ENCODE measurements at regions of chr13 and their contacts with region 1.

Region 1: GRCh38 chr13:52652196-52652979 is at the start of gene SUGT1:
- DNase-seq: peak; percentile 96
- H3K4me3 Mint-ChIP-seq: no peak within 1 kb of the TSS
- H3K27ac Mint-ChIP-seq: no peak within 1 kb of the TSS
- H3K4me1 Mint-ChIP-seq: peaks cover 16% of the 10 kb centered on the region
- H3K27me3 Mint-ChIP-seq: no peaks in the 10 kb centered on the region
- total RNA-seq, gene SUGT1: 63.1 to 64.0 TPM

Region 2: DNA sequence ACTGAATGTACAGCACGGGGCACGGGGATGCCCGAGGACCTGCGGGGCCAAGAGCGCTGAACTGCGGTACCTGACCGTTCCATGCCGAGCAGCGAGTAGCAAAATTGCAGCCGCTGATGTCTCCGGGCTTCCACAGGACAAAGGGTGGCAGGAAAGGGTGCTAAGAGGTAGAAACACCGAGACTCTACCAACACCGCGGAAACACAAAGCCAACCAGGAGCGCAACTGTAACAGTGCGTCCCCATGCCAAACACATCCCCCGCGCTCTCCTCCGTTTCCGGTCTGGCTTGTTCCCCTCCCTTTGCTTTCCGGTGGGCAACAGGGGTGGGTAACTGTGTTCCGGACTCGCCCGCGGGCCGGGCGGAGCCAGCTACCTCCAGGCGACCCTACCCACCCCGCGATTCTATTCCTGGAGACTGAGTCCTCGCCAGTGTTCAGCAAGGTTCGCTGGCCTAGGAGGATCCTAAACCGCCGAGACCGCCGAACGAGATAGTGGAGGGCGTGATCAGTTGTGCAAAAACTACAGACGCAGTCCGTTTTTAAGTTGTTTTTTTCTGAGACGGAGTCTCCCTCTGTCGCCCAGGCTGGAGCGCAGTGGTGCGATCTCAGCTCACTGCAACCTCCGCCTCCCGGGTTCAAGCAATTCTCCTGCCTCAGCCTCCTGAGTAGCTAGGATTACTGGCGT is 458.1 kb before region 1 on chr13:
- CTCF ChIA-PET with region 1: no interaction called
- POLR2A ChIA-PET with region 1: no interaction called
- intact Hi-C with region 1: loop called (anchors 1 kb)
- DNase-seq: peak; percentile 93
- H3K4me3 Mint-ChIP-seq: peak overlapping the region; percentile 97
- H3K27ac Mint-ChIP-seq: peak overlapping the region; percentile 91
- H3K4me1 Mint-ChIP-seq: peaks cover 22% of the 10 kb centered on the region
- H3K27me3 Mint-ChIP-seq: no peaks in the 10 kb centered on the region

Region 3: GRCh38 chr13:52617070-52618060 is 35.0 kb before region 1 on chr13:
- CTCF ChIA-PET with region 1: interaction called, 31 read pairs
- POLR2A ChIA-PET with region 1: interaction called, 25 read pairs
- intact Hi-C with region 1: loop called (anchors 1 kb)
- DNase-seq: peak; percentile 92
- H3K4me3 Mint-ChIP-seq: peak overlapping the region; percentile 99
- H3K27ac Mint-ChIP-seq: peak overlapping the region; percentile 87
- H3K4me1 Mint-ChIP-seq: peaks cover 38% of the 10 kb centered on the region
- H3K27me3 Mint-ChIP-seq: no peaks in the 10 kb centered on the region

Region 4: DNA sequence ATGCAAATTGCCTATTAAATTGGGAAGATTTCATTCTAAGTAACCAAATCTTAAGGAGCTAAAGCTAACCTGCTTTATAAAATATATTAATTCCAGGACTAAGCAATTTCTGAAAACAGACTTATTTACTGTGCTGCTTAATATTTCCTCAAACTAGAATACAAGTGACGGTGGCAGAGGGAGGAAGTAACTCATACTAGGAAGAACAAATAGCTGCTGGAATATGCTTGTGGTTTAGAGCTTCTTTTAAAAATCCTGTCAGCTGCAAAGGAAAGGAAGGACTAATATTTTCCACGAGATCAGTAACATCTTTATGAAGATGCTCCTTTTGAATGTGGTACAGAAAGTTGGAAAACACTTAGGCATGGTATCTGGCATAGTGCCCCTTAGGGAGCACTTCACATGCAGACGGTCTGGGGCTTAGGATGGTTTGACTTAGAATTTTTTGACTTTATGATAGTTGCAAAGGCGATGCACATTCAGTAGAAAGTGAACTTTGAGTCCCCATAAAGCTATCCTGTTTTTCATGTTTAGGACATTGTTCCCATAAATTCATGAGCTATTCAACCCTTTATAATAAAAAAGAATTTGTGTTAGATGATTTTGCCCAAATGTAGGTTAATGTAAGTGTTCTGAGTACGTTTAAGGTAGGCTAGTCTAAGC is 13.6 kb before region 1 on chr13:
- CTCF ChIA-PET with region 1: interaction called, 10 read pairs
- POLR2A ChIA-PET with region 1: interaction called, 3 read pairs
- intact Hi-C with region 1: no loop called
- DNase-seq: no peak
- H3K4me3 Mint-ChIP-seq: no peak overlapping the region
- H3K27ac Mint-ChIP-seq: no peak overlapping the region
- H3K4me1 Mint-ChIP-seq: no peaks in the 10 kb centered on the region
- H3K27me3 Mint-ChIP-seq: no peaks in the 10 kb centered on the region

Region 5: DNA sequence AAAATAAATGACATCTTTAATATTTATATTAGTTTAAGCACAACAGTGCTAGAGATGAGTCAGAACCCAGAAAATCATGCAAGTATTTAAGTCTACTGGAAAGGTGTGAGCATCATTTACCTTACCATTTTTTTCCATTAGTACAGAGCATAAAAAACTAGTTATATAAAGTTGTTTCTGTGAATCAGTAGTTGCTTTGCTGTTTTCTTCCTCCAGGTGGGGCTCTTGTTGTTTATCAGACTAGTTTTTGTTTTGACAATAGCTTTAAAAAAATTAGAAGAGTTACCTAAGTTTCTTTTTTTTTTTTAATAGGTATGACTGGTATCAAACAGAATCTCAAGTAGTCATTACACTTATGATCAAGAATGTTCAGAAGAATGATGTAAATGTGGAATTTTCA is 12.9 kb after region 1 on chr13:
- CTCF ChIA-PET with region 1: interaction called, 23 read pairs
- POLR2A ChIA-PET with region 1: interaction called, 5 read pairs
- intact Hi-C with region 1: no loop called
- DNase-seq: no peak
- H3K4me3 Mint-ChIP-seq: no peak overlapping the region
- H3K27ac Mint-ChIP-seq: no peak overlapping the region
- H3K4me1 Mint-ChIP-seq: peaks cover 2% of the 10 kb centered on the region
- H3K27me3 Mint-ChIP-seq: no peaks in the 10 kb centered on the region

Region 6: GRCh38 chr13:52695856-52696255 is 43.5 kb after region 1 on chr13:
- CTCF ChIA-PET with region 1: no interaction called
- POLR2A ChIA-PET with region 1: no interaction called
- intact Hi-C with region 1: loop called (anchors 2 kb)
- DNase-seq: peak; percentile 71
- H3K4me3 Mint-ChIP-seq: no peak overlapping the region
- H3K27ac Mint-ChIP-seq: peak overlapping the region; percentile 31
- H3K4me1 Mint-ChIP-seq: peaks cover 15% of the 10 kb centered on the region
- H3K27me3 Mint-ChIP-seq: no peaks in the 10 kb centered on the region

Region 7: DNA sequence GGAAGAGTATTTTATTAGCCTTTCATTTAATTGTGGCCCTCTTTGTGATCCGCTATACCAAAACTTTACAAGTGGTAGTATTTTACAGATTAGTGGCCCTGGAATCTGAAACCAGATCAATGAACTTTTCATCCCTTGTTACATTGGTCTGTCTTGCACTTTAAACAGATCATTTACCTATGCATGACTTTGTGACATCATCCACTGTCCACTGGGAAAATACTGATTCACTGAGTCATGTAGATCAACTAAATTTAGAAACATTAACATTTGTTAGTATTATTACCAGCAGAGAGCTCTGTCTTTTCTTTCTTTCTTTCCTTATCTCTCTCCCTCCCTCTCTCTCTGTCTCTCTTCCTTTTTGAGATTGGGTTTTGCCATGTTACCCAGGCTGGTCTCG is 178.6 kb after region 1 on chr13:
- CTCF ChIA-PET with region 1: no interaction called
- POLR2A ChIA-PET with region 1: no interaction called
- intact Hi-C with region 1: no loop called
- DNase-seq: no peak
- H3K4me3 Mint-ChIP-seq: no peak overlapping the region
- H3K27ac Mint-ChIP-seq: no peak overlapping the region
- H3K4me1 Mint-ChIP-seq: no peaks in the 10 kb centered on the region
- H3K27me3 Mint-ChIP-seq: peaks cover 1% of the 10 kb centered on the region